Left ventricle myocardium inferior (tissue), 1 donor: ENCODE measurements at regions of chr11 and their contacts with region 1.

Region 1: GRCh38 chr11:76152086-76152681 is 54.1 kb downstream of the WNT11 start:
- DNase-seq: peak; percentile 89
- H3K4me3 ChIP-seq: peak overlapping the region; percentile 66
- H3K27ac ChIP-seq: peak overlapping the region; percentile 55
- H3K4me1 ChIP-seq: peaks cover 21% of the 10 kb centered on the region
- H3K27me3 ChIP-seq: no peaks in the 10 kb centered on the region
- CTCF ChIP-seq: peak; percentile 96

Region 2: DNA sequence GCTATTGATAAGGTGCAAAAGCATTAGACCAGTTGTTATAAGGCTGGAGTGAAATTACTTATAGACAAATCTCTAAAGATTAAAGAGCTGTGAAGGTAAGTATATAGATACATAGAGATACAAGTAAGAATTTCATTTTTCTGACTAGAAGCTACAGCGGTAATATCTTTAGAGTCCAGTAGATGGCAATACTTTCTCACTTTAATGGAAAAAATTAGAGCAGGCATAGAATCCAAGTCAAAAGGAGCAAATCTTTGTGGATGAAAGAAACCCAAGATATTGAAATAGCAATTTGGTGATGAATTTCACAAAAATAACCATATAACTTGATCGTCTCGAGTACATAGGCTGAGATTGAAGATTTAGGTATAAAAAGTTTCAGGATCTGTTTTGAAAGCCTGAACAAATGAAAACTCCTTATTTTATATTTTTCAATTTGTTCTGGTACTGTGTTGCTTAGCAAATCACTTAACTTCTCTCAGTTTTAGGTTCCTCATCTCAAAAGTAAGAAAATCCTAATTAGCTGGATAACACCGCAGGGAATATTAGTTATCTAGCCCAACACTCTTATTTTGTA is 255.3 kb before region 1 on chr11:
- intact Hi-C with region 1: loop called (anchors 5 kb)
- DNase-seq: no peak
- H3K4me3 ChIP-seq: no peak overlapping the region
- H3K27ac ChIP-seq: no peak overlapping the region
- H3K4me1 ChIP-seq: peaks cover 16% of the 10 kb centered on the region
- H3K27me3 ChIP-seq: no peaks in the 10 kb centered on the region
- CTCF ChIP-seq: peak; percentile 80

Region 3: DNA sequence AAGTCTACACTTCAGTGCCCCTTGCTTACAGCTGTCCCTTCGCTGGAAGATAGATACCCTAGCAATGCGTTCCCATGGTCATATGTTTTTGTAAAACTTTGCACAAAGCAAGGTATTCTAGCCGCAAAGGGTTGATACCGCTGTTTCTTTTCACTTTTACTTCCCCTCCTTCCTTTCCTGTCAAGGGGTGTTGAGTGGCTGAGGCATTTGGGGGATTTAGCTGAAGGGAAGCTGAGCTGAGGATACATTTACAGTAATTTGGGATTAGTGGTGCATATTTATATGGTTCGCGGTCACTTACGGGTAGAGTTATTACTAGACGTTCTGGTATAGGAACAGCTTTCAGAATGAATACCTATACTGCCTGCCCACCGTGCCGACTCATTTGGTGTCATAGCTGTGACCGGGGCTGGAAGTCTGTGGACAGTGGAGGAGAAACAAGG is 141.0 kb after region 1 on chr11:
- intact Hi-C with region 1: no loop called
- DNase-seq: no peak
- H3K4me3 ChIP-seq: no peak overlapping the region
- H3K27ac ChIP-seq: no peak overlapping the region
- H3K4me1 ChIP-seq: no peaks in the 10 kb centered on the region
- H3K27me3 ChIP-seq: no peaks in the 10 kb centered on the region
- CTCF ChIP-seq: no peak

Region 4: GRCh38 chr11:76610871-76611475 is 458.8 kb after region 1 on chr11:
- intact Hi-C with region 1: no loop called
- DNase-seq: peak; percentile 65
- H3K4me3 ChIP-seq: no peak overlapping the region
- H3K27ac ChIP-seq: peak overlapping the region; percentile 64
- H3K4me1 ChIP-seq: peaks cover 60% of the 10 kb centered on the region
- H3K27me3 ChIP-seq: no peaks in the 10 kb centered on the region
- CTCF ChIP-seq: peak; percentile 34